Activated CD4-positive, alpha-beta T cell treated with anti-CD3 and anti-CD28 coated beads, Interleukin-2, amount 10 ng/mL, durations not matched to agents 7 days and 5 days (primary cell): ENCODE measurements at regions of chr4 and their contacts with region 1.

Region 1: GRCh38 chr4:39514888-39515401 is 12.3 kb downstream of the UGDH start:
- DNase-seq: no peak
- H3K4me3 Mint-ChIP-seq: no peak overlapping the region
- H3K27ac Mint-ChIP-seq: no peak overlapping the region
- H3K4me1 Mint-ChIP-seq: no peaks in the 10 kb centered on the region
- H3K27me3 Mint-ChIP-seq: no peaks in the 10 kb centered on the region

Region 2: DNA sequence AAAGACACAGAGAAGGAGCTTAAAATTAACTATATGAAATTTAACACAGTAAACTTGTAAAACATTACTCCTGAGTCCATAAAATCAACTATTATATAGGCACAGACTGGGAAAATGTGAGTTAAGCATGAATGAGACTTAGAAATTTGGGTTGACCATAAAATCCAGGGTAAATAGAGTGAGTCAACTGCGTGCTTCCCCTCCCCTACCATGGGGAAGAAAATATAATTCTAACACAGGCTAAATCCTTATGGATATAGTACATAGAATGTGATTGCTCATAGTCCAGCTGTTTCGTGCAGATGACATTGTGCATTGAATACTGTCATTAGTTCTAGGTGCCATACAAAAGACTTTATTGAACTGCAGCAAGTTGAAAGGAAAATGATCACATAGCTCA is 410.7 kb before region 1 on chr4:
- CTCF ChIA-PET with region 1: no interaction called
- POLR2A ChIA-PET with region 1: interaction called, 11 read pairs
- DNase-seq: no peak
- H3K4me3 Mint-ChIP-seq: no peak overlapping the region
- H3K27ac Mint-ChIP-seq: no peak overlapping the region
- H3K4me1 Mint-ChIP-seq: no peaks in the 10 kb centered on the region
- H3K27me3 Mint-ChIP-seq: no peaks in the 10 kb centered on the region

Region 3: DNA sequence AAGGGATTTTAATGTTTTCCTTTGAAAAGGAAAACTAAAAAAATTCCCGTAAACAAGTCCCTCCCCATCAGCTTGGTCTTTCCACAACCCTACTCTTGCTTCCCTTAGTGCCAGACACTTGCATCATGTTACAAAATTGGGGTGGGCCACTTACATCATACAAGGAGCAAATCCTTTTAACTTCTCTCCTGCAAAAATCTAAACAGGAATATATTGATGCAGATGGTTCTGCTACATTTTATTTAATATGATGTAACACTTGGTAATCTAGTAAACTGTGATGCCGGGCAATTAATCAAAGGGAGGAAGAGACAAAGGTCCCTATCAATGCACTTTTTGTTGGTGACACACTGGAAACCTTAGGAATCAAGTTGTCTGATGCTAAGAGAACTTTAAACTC is 308.2 kb after region 1 on chr4:
- CTCF ChIA-PET with region 1: no interaction called
- POLR2A ChIA-PET with region 1: interaction called, 15 read pairs
- DNase-seq: no peak
- H3K4me3 Mint-ChIP-seq: no peak overlapping the region
- H3K27ac Mint-ChIP-seq: no peak overlapping the region
- H3K4me1 Mint-ChIP-seq: peaks cover 9% of the 10 kb centered on the region
- H3K27me3 Mint-ChIP-seq: no peaks in the 10 kb centered on the region